Activated CD4-positive, alpha-beta T cell treated with anti-CD3 and anti-CD28 coated beads, Interleukin-2, amount 10 ng/mL, durations not matched to agents 7 days and 5 days (primary cell): ENCODE measurements at regions of chr13 and their contacts with region 1.

Region 1: GRCh38 chr13:26502826-26503225 is 54.7 kb upstream of the WASF3 start:
- DNase-seq: peak; percentile 14
- H3K4me3 Mint-ChIP-seq: no peak overlapping the region
- H3K27ac Mint-ChIP-seq: peak overlapping the region; percentile 15
- H3K4me1 Mint-ChIP-seq: peaks cover 12% of the 10 kb centered on the region
- H3K27me3 Mint-ChIP-seq: no peaks in the 10 kb centered on the region

Region 2: GRCh38 chr13:26469602-26470001 is 33.2 kb before region 1 on chr13:
- CTCF ChIA-PET with region 1: no interaction called
- POLR2A ChIA-PET with region 1: no interaction called
- DNase-seq: no peak
- H3K4me3 Mint-ChIP-seq: no peak overlapping the region
- H3K27ac Mint-ChIP-seq: no peak overlapping the region
- H3K4me1 Mint-ChIP-seq: no peaks in the 10 kb centered on the region
- H3K27me3 Mint-ChIP-seq: peaks cover 6% of the 10 kb centered on the region

Region 3: DNA sequence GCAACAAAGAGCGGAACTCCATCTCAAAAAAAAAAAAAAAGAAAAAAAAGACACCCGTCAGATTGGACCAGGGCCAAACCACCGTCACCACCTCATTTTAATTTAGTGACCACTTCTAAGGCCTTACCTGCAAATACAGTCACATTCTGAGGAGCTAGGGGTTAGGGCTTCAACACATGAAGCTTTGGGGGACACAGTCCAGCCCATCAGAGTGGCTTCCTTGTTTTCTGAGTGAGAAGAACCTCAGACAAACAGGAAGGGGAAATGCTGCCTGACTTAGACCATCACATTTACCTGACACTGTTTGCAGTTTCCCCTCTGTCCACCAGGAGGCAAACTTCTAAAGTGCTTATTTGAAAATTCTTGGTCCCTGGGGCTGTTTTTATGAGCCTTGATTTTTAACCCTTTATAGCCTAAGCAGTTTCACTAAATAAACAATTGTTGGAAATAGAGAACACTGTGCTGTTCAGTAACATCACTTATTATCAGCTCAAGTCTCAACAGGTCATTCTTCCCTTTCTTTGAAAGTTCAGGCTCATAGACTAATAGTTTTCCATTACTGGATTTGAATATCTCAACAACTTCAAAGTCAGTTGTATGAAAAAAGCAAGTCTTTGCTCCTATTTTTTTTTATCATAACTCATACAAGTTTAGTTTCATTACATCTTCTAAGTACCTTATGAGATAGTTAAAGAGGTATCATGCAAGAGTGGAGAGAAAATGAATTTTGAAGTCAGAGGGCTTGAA is 20.2 kb before region 1 on chr13:
- CTCF ChIA-PET with region 1: interaction called, 11 read pairs
- POLR2A ChIA-PET with region 1: no interaction called
- DNase-seq: peak; percentile 77
- H3K4me3 Mint-ChIP-seq: no peak overlapping the region
- H3K27ac Mint-ChIP-seq: peak overlapping the region; percentile 79
- H3K4me1 Mint-ChIP-seq: peaks cover 16% of the 10 kb centered on the region
- H3K27me3 Mint-ChIP-seq: no peaks in the 10 kb centered on the region

Region 4: DNA sequence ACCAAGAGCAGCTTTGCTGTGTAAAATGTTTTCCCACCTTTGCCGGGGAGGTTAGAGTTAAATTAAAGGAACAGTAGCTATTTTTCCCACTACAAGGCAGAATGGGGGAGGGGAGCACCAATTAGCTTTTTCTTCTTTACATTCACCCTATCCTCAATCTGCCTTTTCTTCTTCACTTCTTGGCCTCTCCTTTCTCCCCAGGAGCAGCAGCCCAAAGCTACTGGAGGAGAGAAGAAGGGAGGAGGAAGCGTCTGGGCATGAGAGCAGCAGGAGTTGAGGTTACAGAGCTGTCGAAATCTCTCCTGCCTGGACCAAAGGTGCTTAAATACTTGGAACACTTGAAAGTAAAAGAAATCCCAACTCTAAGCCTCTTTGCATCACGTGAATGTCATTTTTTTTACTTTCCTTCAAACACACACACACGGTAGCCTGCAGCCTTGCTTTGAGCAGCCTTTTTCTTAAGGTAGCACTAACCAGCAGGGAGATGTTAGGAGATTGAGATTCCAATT is 15.7 kb after region 1 on chr13:
- CTCF ChIA-PET with region 1: no interaction called
- POLR2A ChIA-PET with region 1: no interaction called
- DNase-seq: no peak
- H3K4me3 Mint-ChIP-seq: no peak overlapping the region
- H3K27ac Mint-ChIP-seq: no peak overlapping the region
- H3K4me1 Mint-ChIP-seq: no peaks in the 10 kb centered on the region
- H3K27me3 Mint-ChIP-seq: peaks cover 4% of the 10 kb centered on the region